Tibial artery (tissue), 4 donors: ENCODE measurements at regions of chr13 and their contacts with region 1.

Region 1: DNA sequence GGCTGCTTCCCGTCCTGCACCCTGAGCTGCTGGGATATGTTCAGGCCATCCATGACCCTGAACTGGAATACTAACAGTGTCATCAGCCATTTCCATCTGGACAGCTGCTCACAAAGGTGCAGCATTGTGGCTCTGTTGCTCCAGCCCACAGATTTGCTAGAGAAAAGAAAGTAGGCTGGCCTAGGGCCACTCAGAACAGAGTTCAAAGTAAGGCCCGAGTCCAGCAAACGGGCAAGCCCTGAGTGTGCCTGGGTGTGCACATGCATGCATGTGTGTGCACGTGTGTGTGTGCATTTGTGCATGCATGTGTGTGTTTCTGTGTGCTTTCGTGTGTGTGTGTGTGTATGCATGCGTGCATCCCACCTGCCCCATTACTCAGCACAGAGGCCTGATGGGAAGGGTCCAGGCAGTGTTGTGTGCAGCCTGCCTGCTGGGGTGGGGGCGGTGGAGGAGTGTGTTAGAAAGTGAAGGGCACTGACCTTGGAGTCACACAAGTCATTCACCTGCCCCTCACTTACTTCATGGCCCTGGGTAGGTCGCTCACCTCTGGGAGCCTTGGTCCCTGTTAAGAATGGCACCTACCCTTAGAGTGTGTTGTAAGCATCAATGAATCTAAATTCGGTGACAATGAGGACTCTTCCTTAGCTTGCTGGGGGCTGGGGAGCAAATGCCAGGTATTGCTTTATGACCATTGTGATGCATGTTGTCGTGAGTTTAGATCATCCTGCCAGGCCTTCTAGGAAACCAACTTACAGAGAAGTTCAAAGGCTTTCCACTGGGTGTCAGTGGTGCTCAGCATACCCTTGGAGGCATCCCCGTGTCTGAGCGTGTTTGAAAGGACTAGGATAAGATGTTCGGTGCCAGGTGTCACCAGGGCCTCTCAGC is 53.2 kb downstream of the GPR12 start:
- DNase-seq: no peak
- H3K4me3 ChIP-seq: no peak overlapping the region
- H3K27ac ChIP-seq: no peak overlapping the region
- H3K4me1 ChIP-seq: no peaks in the 10 kb centered on the region
- H3K27me3 ChIP-seq: peaks cover 0 to 8% of the 10 kb centered on the region in 2 donors
- CTCF ChIP-seq: peak; percentile 25 to 30

Region 2: GRCh38 chr13:26929971-26930730 is 222.8 kb after region 1 on chr13:
- intact Hi-C with region 1: loop called (anchors 5 kb)
- DNase-seq: peak in 1 of 2 donors; percentile 36
- H3K4me3 ChIP-seq: no peak overlapping the region
- H3K27ac ChIP-seq: no peak overlapping the region
- H3K4me1 ChIP-seq: peaks cover 0 to 6% (median 3%) of the 10 kb centered on the region in 4 donors
- H3K27me3 ChIP-seq: peaks cover 0 to 18% of the 10 kb centered on the region in 2 donors
- CTCF ChIP-seq: peak; percentile 68 to 92